Transverse colon (tissue), 4 donors: ENCODE measurements at regions of chrX and their contacts with region 1.

Region 1: DNA sequence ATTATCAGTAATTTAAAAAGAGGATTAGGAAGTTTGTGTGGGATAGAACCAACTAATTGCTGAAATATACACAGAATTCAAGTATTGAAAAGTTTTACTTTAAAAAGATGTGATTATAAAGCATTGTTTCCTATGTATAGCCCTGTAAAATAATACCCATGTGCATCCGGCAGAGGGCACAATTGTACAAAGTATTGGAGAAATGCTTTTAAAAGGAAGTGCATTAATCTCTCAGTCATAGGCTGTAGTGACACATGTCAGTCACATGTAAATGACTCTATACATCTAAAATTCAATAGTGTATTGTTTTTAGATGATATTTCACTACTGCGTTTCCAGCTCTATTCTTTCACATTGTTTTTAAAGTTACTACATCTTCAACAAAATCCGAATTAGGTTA is 9.7 kb upstream of the GEMIN8 start:
- DNase-seq: peak; percentile 61
- H3K4me3 ChIP-seq: no peak overlapping the region
- H3K27ac ChIP-seq: no peak overlapping the region
- H3K4me1 ChIP-seq: no peaks in the 10 kb centered on the region
- H3K27me3 ChIP-seq: no peaks in the 10 kb centered on the region
- CTCF ChIP-seq: peak; percentile 50 to 69 (median 54)
- EP300 ChIP-seq: no peak
- POLR2A ChIP-seq: no peak

Region 2: GRCh38 chrX:14095702-14096101 is 56.4 kb after region 1 on chrX:
- in situ Hi-C with region 1: no loop called
- intact Hi-C with region 1: no loop called
- DNase-seq: peak; percentile 9
- H3K4me3 ChIP-seq: no peak overlapping the region
- H3K27ac ChIP-seq: no peak overlapping the region
- H3K4me1 ChIP-seq: no peaks in the 10 kb centered on the region
- H3K27me3 ChIP-seq: no peaks in the 10 kb centered on the region
- CTCF ChIP-seq: peak; percentile 29 to 46 (median 44)
- EP300 ChIP-seq: no peak
- POLR2A ChIP-seq: no peak

Region 3: GRCh38 chrX:14660970-14661369 is 621.6 kb after region 1 on chrX:
- in situ Hi-C with region 1: no loop called
- intact Hi-C with region 1: no loop called
- DNase-seq: no peak
- H3K4me3 ChIP-seq: no peak overlapping the region
- H3K27ac ChIP-seq: no peak overlapping the region
- H3K4me1 ChIP-seq: no peaks in the 10 kb centered on the region
- H3K27me3 ChIP-seq: no peaks in the 10 kb centered on the region
- CTCF ChIP-seq: no peak
- EP300 ChIP-seq: no peak
- POLR2A ChIP-seq: no peak

Region 4: DNA sequence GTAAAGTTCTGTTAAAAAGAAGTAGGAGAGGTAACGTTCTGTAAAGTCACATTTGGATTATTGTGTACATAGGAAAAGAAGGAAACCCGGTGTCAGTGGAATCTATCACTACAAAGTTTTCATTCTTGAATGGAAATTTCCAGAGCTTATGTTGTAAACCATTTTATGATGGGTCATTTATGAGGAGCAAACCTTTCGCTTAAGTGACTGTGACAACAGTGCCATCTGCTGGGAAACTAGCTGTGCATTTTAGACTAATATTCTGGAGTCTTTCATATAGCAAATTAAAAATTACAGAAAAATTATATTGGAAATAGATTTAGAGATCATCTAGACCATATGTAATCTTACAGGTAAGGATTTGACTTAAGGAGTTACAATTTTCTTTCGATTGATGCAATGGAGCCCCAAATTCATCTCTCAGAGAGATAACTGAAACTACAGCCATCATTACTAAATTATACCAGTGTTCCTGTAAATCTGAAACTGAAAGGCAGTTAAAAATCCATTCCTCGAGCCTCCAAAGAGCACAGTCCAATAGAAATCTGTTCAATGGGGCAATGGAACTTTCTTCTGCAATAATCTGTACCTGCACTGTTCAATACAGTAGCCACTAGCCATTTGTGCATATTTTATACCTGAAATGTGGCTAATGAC is 1203.7 kb after region 1 on chrX:
- in situ Hi-C with region 1: loop called in 3 of 4 experiments (anchors 10 to 25 kb)
- intact Hi-C with region 1: no loop called
- DNase-seq: peak; percentile 40
- H3K4me3 ChIP-seq: no peak overlapping the region
- H3K27ac ChIP-seq: no peak overlapping the region
- H3K4me1 ChIP-seq: no peaks in the 10 kb centered on the region
- H3K27me3 ChIP-seq: no peaks in the 10 kb centered on the region
- CTCF ChIP-seq: peak; percentile 32 to 52 (median 45)
- EP300 ChIP-seq: no peak
- POLR2A ChIP-seq: no peak